ENCODE measurements at regions of chr5 and their contacts with region 1.

Region 1: GRCh38 chr5:177390363-177391300 is 6.4 kb downstream of the SLC34A1 start:
- DNase-seq: peak; percentile 94
- ATAC-seq: peak; percentile 68
- H3K4me3 Mint-ChIP-seq: peak overlapping the region; percentile 52
- H3K27ac Mint-ChIP-seq: peak overlapping the region; percentile 87
- H3K4me1 Mint-ChIP-seq: peaks cover 36% of the 10 kb centered on the region
- H3K27me3 Mint-ChIP-seq: no peaks in the 10 kb centered on the region

Region 2: GRCh38 chr5:177311723-177312648 is 78.6 kb before region 1 on chr5 and contains the start of gene MXD3:
- CTCF ChIA-PET with region 1: interaction called, 13 read pairs
- POLR2A ChIA-PET with region 1: interaction called, 5 read pairs
- intact Hi-C with region 1: loop called in 1 of 2 experiments (anchors 10 kb)
- DNase-seq: peak; percentile 99
- ATAC-seq: peak; percentile 88
- H3K4me3 Mint-ChIP-seq: peak within 1 kb of the TSS; percentile 85
- H3K27ac Mint-ChIP-seq: peak within 1 kb of the TSS; percentile 84
- H3K4me1 Mint-ChIP-seq: peaks cover 28% of the 10 kb centered on the region
- H3K27me3 Mint-ChIP-seq: no peaks in the 10 kb centered on the region
- total RNA-seq, gene MXD3: 21.3 to 27.2 TPM

Region 3: DNA sequence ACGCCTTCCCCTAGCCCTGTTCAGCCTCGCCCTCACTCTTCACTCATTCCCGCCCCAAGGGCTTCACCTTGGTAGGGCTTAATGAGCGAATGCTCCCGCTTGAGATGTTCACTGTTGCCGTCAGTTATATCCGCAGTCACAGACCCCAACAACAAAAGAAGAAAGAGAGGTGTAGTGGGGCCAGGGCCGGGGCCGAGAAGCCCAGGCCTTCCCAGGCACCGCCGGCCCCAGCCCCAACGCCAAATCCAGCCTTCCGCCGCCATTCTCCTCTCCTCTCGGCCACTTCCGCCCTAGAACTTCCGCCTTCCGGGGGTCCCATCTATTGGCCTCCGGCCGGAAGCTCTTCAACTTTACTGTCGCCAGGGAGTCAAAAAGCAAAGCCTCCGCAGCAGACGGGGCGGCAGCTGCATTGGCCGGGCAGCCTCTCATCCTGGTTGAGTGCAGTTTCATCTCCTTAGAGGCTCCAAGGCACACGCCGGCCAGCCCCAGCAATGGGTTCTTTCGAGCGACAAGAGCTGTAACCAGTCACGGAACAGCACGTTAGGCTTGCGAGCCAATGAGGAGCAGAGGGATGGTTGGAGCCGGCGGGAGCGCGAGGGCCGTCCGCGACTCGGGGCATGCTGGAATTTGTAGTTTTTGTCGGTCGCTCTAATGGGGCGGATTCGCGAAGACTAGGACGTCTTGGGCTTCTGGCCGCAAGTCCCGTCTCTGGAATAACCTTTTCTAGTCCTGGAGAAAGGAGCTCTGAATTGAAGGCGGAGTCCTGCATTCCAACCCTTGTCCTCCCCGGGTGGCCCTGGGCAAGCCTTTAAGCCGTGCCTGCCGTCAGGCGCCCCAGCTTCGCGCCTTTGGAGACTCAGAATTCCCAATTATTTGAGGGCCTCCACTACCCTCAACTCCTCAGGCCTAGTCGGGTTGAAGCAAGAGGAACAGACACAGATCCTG is 39.0 kb before region 1 on chr5 and contains the start of gene LMAN2:
- CTCF ChIA-PET with region 1: interaction called, 25 read pairs
- POLR2A ChIA-PET with region 1: interaction called, 4 read pairs
- intact Hi-C with region 1: loop called (anchors 1 to 5 kb)
- DNase-seq: peak; percentile 95
- ATAC-seq: peak; percentile 99
- H3K4me3 Mint-ChIP-seq: peak within 1 kb of the TSS; percentile 89
- H3K27ac Mint-ChIP-seq: peak within 1 kb of the TSS; percentile 99
- H3K4me1 Mint-ChIP-seq: peaks cover 48% of the 10 kb centered on the region
- H3K27me3 Mint-ChIP-seq: no peaks in the 10 kb centered on the region
- total RNA-seq, gene LMAN2: 74.5 to 92.1 TPM

Region 4: DNA sequence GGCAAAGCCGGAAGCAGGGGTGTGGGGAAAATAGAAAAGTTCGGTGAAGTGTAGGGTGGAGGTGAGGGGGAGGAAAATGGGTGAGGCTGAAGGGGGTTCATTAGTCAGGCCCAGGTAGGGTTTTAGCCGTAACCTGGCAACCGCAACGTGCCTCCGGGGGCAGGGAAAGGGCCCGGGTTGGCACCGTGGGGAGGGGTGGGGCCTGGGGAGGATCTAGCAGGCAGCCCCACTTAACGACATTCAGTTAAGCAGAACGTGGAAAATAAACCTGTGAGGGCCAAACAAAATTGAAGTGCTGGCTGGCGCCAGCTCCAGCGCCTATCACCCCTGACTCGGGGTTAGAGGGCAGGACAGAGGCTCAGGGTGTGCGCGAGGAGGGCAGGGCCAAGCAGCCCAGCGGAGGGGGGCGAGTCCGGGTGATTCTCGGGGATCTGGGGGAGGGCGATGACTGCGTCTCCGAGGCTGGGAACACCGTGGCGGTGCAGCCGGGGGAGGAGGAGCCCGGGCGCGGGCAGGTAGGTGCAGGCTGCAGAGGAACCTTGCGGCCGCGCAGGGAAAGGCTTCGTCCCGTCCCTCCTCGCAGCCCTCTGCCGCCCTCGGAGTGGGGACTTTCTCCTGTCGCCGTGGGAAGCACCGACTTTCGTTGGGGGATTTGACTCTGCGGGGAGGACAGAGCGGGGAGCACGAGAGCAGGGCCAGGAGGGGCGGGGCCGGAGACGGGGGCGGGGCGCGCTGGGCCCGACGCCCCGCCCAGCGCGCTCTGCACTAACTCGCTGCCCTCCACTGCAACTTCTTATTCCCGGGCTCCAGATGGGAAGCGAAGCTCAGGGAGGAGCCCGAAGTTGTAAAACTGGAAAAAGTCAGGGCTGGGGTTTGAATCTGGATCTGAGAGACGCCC is 27.8 kb before region 1 on chr5:
- CTCF ChIA-PET with region 1: interaction called, 65 read pairs
- POLR2A ChIA-PET with region 1: interaction called, 4 read pairs
- intact Hi-C with region 1: loop called (anchors 1 kb)
- DNase-seq: peak; percentile 84
- ATAC-seq: peak; percentile 68
- H3K4me3 Mint-ChIP-seq: peak overlapping the region; percentile 67
- H3K27ac Mint-ChIP-seq: peak overlapping the region; percentile 82
- H3K4me1 Mint-ChIP-seq: peaks cover 74% of the 10 kb centered on the region
- H3K27me3 Mint-ChIP-seq: no peaks in the 10 kb centered on the region

Region 5: GRCh38 chr5:177403792-177404640 is 13.4 kb after region 1 on chr5:
- CTCF ChIA-PET with region 1: interaction called, 195 read pairs
- POLR2A ChIA-PET with region 1: interaction called, 20 read pairs
- intact Hi-C with region 1: loop called (anchors 1 kb)
- DNase-seq: peak; percentile 91
- ATAC-seq: peak; percentile 84
- H3K4me3 Mint-ChIP-seq: peak overlapping the region; percentile 72
- H3K27ac Mint-ChIP-seq: peak overlapping the region; percentile 42
- H3K4me1 Mint-ChIP-seq: peaks cover 27% of the 10 kb centered on the region
- H3K27me3 Mint-ChIP-seq: peaks cover 14% of the 10 kb centered on the region

Region 6: DNA sequence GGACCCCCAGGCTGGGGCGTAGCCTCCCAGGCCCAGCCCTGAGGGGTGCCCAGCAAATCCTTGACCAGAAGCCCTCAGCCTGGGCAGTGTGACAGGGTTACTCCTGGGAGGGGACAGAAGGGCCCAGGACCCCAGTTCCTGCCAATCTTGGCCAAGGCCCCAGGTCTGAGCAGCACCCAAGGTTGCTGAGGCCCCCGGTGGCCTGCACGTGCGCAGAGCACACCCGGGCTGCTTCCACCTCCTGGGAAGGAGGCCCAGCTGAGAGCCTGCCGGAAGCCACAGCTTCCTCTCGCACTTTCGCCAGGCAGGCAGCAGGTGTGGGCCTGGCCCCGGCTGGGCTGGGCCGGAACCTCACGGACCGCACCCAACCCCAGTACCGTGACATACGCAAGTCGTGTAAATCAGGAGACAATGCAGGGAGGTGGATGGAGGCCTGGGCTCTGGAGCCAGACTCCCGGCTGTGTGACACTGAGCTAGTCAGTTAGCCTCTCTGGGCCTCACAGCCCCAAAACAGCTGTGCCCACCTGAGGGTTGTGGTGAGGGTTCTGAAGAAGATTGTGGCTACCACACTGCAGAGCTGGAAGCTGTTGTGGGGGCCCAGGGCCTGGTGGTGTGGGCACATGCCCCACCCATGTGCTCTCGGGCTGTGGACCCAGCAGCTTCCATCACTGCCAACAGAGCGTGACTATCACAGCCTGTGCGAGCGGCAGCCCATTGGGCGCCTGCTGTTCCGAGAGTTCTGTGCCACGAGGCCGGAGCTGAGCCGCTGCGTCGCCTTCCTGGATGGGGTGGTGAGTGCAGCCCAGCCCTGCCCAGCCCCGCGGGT is 40.9 kb after region 1 on chr5:
- CTCF ChIA-PET with region 1: interaction called, 29 read pairs
- POLR2A ChIA-PET with region 1: interaction called, 7 read pairs
- intact Hi-C with region 1: loop called (anchors 1 kb)
- DNase-seq: peak; percentile 81
- ATAC-seq: peak; percentile 19
- H3K4me3 Mint-ChIP-seq: peak overlapping the region; percentile 88
- H3K27ac Mint-ChIP-seq: peak overlapping the region; percentile 94
- H3K4me1 Mint-ChIP-seq: peaks cover 73% of the 10 kb centered on the region
- H3K27me3 Mint-ChIP-seq: no peaks in the 10 kb centered on the region

Region 7: DNA sequence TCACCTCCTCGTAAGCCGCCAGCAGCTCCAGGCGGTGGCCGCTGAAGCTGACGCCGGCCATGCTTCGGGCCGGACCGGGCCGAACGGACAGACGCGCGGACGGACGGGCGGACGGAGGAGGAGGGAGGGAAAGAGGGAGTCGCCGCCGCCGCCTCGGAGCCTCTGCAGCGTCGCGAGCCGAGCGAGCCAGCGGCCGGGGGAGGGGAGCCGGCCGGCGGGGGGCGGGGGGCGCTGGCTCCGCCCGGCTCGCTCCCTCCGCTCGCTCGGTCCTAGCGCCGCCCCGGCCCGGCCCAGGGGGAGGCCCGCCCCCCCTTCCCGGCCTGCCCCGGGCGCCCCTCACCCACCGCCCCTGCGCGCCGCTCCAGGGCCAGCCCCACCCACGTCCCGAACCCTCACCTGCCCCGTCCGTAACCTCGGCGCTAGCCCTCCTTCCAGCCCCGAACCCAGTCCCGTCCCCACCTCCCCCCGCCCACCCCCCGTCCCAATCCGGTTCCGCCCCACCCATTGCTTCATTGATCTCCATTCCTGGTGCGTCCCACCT is 82.9 kb after region 1 on chr5 and contains the start of gene DBN1:
- CTCF ChIA-PET with region 1: interaction called, 17 read pairs
- POLR2A ChIA-PET with region 1: no interaction called
- intact Hi-C with region 1: no loop called
- DNase-seq: peak; percentile 62
- ATAC-seq: peak; percentile 44
- H3K4me3 Mint-ChIP-seq: peak within 1 kb of the TSS; percentile 65
- H3K27ac Mint-ChIP-seq: peak within 1 kb of the TSS; percentile 70
- H3K4me1 Mint-ChIP-seq: peaks cover 35% of the 10 kb centered on the region
- H3K27me3 Mint-ChIP-seq: peaks cover 4% of the 10 kb centered on the region
- total RNA-seq, gene DBN1: 29.5 to 41.2 TPM